ENCODE measurements at regions of chr2 and their contacts with region 1.

Region 1: DNA sequence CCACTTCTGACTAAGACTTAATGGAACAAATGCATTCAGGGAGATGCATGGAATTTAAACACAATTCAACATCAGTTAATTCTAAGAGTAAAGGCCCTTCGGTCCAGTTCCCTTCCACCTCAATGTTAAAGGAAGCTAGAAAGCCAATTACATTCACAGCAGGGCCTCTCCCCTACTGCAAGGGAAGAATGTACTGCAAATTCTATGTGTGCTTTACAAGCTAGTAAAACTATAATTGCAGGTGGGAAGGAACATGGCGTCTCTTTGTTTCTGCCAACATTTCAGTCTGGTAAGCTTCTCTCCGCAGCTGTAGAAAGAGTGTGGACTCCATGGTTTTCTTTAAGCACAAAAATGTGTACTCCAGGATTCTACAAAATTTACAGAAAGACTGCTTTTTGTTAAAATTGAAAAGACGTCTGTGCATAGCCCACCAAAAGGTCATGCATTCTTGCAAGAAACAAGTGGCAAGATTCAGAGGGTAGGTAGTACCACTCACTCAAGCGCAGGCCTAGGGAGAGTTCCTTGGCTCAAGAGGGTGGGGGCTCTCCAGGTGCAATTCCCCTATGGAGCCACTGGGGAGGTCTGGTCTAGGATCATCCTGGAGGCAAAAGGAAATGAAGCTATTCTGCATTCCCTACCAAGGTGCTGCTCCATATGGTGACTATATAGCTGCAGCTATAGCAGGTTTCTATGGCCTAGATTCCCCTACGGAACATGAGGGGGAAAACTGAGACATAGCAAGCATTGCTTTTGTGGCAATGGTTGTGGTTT is 127.0 kb upstream of the FZD5 start:
- DNase-seq: peak; percentile 68
- ATAC-seq: peak; percentile 94
- H3K4me3 Mint-ChIP-seq: peak overlapping the region; percentile 19; the same call in 1 of the 2 replicates
- H3K27ac Mint-ChIP-seq: peak overlapping the region; percentile 94
- H3K4me1 Mint-ChIP-seq: peaks cover 57% of the 10 kb centered on the region
- H3K27me3 Mint-ChIP-seq: no peaks in the 10 kb centered on the region
- CTCF ChIP-seq: peak; percentile 40; the same call in 1 of the 2 replicates

Region 2: GRCh38 chr2:207813221-207813916 is 83.3 kb before region 1 on chr2:
- CTCF ChIA-PET with region 1: interaction called, 16 read pairs
- POLR2A ChIA-PET with region 1: interaction called, 3 read pairs
- DNase-seq: peak; percentile 23
- ATAC-seq: peak; percentile 3; the same call in 1 of the 2 replicates
- H3K4me3 Mint-ChIP-seq: peak overlapping the region; percentile 42
- H3K27ac Mint-ChIP-seq: peak overlapping the region; percentile 93
- H3K4me1 Mint-ChIP-seq: peaks cover 62% of the 10 kb centered on the region
- H3K27me3 Mint-ChIP-seq: no peaks in the 10 kb centered on the region
- CTCF ChIP-seq: no peak

Region 3: DNA sequence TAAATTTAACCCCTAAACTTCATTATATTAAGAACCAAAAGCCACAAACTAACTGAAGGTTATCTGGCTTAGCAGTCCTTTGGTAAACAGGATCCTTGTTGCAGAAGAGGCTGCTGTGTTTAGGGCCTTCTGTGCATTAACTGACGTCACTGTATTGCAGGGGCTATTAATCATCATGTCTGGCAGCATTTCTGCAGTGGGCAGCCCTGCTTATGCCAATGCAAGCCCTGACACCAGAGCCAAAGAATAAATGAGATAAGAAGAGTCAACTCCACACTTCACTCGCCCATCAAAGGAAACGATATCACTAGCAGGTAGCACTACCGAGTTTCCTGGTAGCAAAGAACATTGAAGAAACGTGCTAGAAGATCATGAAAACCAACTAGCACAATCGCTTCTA is 18.0 kb after region 1 on chr2:
- CTCF ChIA-PET with region 1: interaction called, 15 read pairs
- POLR2A ChIA-PET with region 1: interaction called, 3 read pairs
- DNase-seq: no peak
- ATAC-seq: no peak
- H3K4me3 Mint-ChIP-seq: no peak overlapping the region
- H3K27ac Mint-ChIP-seq: no peak overlapping the region
- H3K4me1 Mint-ChIP-seq: peaks cover 10% of the 10 kb centered on the region
- H3K27me3 Mint-ChIP-seq: no peaks in the 10 kb centered on the region
- CTCF ChIP-seq: no peak

Region 4: GRCh38 chr2:207974216-207974605 is 77.5 kb after region 1 on chr2:
- CTCF ChIA-PET with region 1: interaction called, 22 read pairs
- POLR2A ChIA-PET with region 1: no interaction called
- DNase-seq: no peak
- ATAC-seq: no peak
- H3K4me3 Mint-ChIP-seq: no peak overlapping the region
- H3K27ac Mint-ChIP-seq: peak overlapping the region; percentile 66
- H3K4me1 Mint-ChIP-seq: peaks cover 42% of the 10 kb centered on the region
- H3K27me3 Mint-ChIP-seq: no peaks in the 10 kb centered on the region
- CTCF ChIP-seq: no peak

Measured in WTC11 (cell line).